Activated CD4-positive, alpha-beta T cell treated with anti-CD3 and anti-CD28 coated beads for 36 hours (primary cell): ENCODE measurements at regions of chr17 and their contacts with region 1.

Region 1: DNA sequence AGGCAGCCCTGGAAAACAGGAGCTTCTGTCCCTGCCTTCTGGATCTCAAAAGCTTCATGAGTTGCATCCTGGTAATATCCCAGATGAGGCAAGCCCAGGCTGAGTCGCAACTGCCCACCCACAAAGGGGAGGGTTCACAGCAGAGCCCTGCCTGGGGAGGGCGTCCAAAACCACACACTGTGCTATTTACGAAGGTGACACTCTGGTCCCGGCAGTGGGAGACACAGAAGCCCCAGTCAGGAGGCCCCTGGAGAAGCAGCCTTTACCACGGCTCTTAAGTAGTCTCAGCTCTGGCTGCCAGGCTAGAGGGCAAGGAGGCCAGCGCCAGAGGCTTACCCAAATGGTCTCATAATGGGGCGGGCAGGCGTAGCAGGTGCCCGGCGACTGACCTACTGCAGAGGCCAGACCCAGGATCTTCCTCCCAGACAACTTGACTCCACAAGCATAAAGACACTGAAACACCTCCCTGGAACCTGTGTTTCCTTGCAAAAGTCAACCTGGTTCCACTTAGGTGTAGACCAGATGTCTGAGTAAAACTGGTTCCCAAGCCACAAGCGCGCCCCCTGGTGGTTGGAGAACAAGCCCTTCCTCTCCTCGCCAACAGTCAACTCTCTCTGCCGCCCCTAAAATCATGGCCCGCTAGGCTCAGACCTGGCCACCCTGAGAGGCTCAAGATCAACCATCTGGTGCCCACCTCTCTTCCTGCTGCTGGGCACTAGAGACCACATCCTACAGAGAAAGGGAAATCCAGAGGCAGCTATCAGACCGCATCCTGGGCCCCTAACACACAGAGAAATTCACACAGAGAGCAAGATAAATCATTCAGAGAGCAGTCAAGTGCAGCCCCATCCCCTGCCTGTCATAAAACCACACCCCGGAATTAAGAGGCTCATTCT is 5.2 kb downstream of the AXIN2 start:
- DNase-seq: peak; percentile 96
- ATAC-seq: peak; percentile 50
- H3K4me3 Mint-ChIP-seq: no peak overlapping the region
- H3K27ac Mint-ChIP-seq: peak overlapping the region; percentile 10
- H3K4me1 Mint-ChIP-seq: peaks cover 27% of the 10 kb centered on the region
- H3K27me3 Mint-ChIP-seq: peaks cover 4% of the 10 kb centered on the region

Region 2: DNA sequence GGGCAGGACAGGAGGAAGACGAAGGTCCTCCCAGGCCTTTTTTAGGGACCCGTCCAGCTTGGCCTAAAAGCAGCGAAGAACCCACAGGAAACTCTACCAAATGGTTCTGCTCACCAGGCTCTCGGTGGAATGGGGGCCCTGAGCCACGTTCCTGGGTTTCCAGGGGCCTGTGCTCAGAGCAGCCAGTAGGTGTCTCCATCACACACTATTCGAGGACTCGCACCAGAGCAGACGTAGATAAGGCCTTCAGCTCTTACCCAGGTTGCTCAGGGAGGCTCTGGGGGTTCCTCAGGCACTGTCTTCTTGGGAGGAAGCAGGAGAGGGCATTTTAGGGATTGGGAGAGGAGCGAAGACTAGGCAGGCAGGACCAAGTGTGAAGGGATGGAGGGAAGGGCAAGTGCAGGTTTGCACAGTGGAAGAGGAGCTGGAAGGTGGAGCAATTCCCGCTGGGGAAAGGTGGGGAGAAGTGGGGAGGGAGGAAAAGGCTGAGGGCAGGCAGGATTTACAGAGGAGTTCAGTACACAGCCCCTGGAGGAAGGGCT is 262.0 kb before region 1 on chr17:
- CTCF ChIA-PET with region 1: interaction called, 15 read pairs
- POLR2A ChIA-PET with region 1: no interaction called
- intact Hi-C with region 1: loop called (anchors 1 kb)
- DNase-seq: peak; percentile 76
- ATAC-seq: peak; percentile 95
- H3K4me3 Mint-ChIP-seq: no peak overlapping the region
- H3K27ac Mint-ChIP-seq: no peak overlapping the region
- H3K4me1 Mint-ChIP-seq: peaks cover 2% of the 10 kb centered on the region
- H3K27me3 Mint-ChIP-seq: no peaks in the 10 kb centered on the region

Region 3: GRCh38 chr17:65359016-65359415 is 197.2 kb before region 1 on chr17:
- CTCF ChIA-PET with region 1: no interaction called
- POLR2A ChIA-PET with region 1: no interaction called
- intact Hi-C with region 1: loop called in 1 of 2 experiments (anchors 2 kb)
- DNase-seq: peak; percentile 75
- ATAC-seq: peak; percentile 100
- H3K4me3 Mint-ChIP-seq: no peak overlapping the region
- H3K27ac Mint-ChIP-seq: no peak overlapping the region
- H3K4me1 Mint-ChIP-seq: peaks cover 21% of the 10 kb centered on the region
- H3K27me3 Mint-ChIP-seq: peaks cover 7% of the 10 kb centered on the region

Region 4: GRCh38 chr17:65455972-65456343 is 100.3 kb before region 1 on chr17:
- CTCF ChIA-PET with region 1: no interaction called
- POLR2A ChIA-PET with region 1: no interaction called
- intact Hi-C with region 1: loop called in 1 of 2 experiments (anchors 1 kb)
- DNase-seq: peak; percentile 34
- ATAC-seq: peak; percentile 33
- H3K4me3 Mint-ChIP-seq: no peak overlapping the region
- H3K27ac Mint-ChIP-seq: no peak overlapping the region
- H3K4me1 Mint-ChIP-seq: peaks cover 6% of the 10 kb centered on the region
- H3K27me3 Mint-ChIP-seq: no peaks in the 10 kb centered on the region

Region 5: GRCh38 chr17:65523853-65524664 is 32.2 kb before region 1 on chr17:
- CTCF ChIA-PET with region 1: no interaction called
- POLR2A ChIA-PET with region 1: no interaction called
- intact Hi-C with region 1: loop called (anchors 1 kb)
- DNase-seq: no peak
- ATAC-seq: no peak
- H3K4me3 Mint-ChIP-seq: no peak overlapping the region
- H3K27ac Mint-ChIP-seq: peak overlapping the region; percentile 53
- H3K4me1 Mint-ChIP-seq: peaks cover 26% of the 10 kb centered on the region
- H3K27me3 Mint-ChIP-seq: no peaks in the 10 kb centered on the region

Region 6: DNA sequence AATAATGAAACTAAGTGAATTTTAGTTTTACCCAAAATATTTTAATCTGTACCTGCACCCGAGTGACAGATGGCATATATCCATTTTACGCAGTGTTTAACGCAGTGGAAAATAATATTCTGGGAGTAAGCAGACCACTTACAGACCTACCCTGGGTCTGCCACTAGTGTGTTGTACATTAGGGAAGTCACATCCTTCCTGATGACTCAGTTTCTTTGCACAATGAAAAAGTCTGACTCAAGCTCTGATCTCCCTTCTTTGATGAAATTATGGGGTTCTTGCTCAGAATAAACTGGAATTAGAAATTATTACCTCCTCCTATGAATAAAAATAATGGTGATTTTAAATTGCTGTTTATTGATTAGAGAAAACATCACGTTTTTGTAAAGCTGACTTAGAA is 128.4 kb after region 1 on chr17:
- CTCF ChIA-PET with region 1: no interaction called
- POLR2A ChIA-PET with region 1: no interaction called
- intact Hi-C with region 1: no loop called
- DNase-seq: no peak
- ATAC-seq: no peak
- H3K4me3 Mint-ChIP-seq: no peak overlapping the region
- H3K27ac Mint-ChIP-seq: no peak overlapping the region
- H3K4me1 Mint-ChIP-seq: no peaks in the 10 kb centered on the region
- H3K27me3 Mint-ChIP-seq: no peaks in the 10 kb centered on the region

Region 7: GRCh38 chr17:65988081-65988850 is 432.0 kb after region 1 on chr17:
- CTCF ChIA-PET with region 1: no interaction called
- POLR2A ChIA-PET with region 1: no interaction called
- intact Hi-C with region 1: loop called in 1 of 2 experiments (anchors 5 kb)
- DNase-seq: peak; percentile 13
- ATAC-seq: no peak
- H3K4me3 Mint-ChIP-seq: no peak overlapping the region
- H3K27ac Mint-ChIP-seq: no peak overlapping the region
- H3K4me1 Mint-ChIP-seq: no peaks in the 10 kb centered on the region
- H3K27me3 Mint-ChIP-seq: no peaks in the 10 kb centered on the region